ENCODE measurements at regions of chr10 and their contacts with region 1.

Region 1: DNA sequence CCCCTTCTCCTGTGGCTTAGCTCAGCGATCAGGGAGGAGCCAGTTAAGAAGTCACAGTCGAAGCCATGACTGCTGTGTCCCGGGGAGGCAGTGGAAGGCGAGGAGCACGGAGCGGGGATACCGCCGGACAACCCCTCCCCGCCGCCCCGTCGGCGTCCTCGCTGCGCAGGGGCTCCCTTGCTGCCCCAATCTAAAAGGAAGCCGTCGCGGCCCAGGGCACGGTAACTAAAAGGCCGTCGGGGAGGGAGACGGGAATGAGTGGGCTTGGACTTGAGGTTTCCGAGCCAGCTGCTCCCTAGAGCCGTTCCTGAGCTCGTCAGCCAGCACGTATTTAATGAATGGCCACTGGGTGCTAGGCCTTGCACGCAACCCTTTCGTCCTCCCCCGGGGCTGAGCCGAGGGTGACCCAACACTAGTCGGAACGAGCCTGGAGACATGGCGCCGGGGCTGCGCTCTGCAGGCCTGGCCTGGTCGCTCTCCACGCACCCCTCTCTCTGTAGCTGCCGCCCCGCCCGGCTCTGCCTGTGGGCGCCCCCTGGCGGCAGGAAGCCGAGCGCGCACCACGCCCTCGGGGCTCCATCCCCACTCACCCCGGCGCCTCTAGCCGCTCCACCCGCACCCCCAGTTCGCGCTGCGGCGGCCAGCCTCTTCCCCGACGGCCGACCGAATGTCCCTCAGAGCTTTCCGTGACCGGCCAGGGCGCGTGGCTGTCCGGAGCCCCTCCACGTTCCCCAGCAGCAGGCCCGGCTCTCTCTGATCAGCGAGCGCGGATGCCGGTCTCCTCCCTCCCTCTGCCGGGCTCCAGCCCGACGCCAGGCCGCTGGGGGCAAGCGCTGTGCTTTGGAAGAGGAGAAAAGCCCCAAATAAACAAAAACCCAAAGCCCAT is 29.3 kb upstream of the KCNK18 start:
- DNase-seq: peak in 9 of 10 donors; percentile 51 to 95 (median 66)

Region 2: GRCh38 chr10:116849248-116850057 is 318.6 kb before region 1 on chr10 and contains the start of gene ENO4:
- intact Hi-C with region 1: loop called (anchors 5 kb)
- DNase-seq: peak; percentile 65 to 96 (median 82)

Region 3: GRCh38 chr10:117005027-117005526 is 163.0 kb before region 1 on chr10 and contains the start of gene SHTN1:
- intact Hi-C with region 1: loop called (anchors 5 kb)
- DNase-seq: peak; percentile 64 to 96 (median 79)

Region 4: DNA sequence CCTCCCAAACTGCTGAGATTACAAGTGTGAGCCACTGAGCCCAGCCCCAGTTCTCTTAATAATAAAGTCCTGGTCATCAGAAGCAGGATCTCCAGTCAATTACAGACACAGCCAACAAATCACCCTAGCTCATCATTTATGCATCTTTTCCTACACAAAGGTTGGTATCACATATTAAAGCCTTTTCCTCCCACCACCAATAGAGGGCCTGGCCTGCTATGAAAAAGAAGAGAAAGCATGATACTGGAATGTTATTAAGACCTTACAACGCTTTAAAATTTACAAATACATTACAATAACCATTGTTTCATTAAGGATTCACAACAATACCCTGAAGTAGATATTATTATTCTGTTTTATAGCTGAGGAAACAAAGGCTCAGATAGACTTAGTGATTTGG is 55.8 kb before region 1 on chr10:
- intact Hi-C with region 1: loop called (anchors 10 kb)
- DNase-seq: no peak